ENCODE measurements at regions of chr4 and their contacts with region 1.

Region 1: GRCh38 chr4:163191999-163192398 is 25.3 kb upstream of the NAF1 start:
- DNase-seq: no peak
- H3K4me3 ChIP-seq: no peak overlapping the region
- CTCF ChIP-seq: peak; percentile 10

Region 2: GRCh38 chr4:163048447-163048846 is 143.6 kb before region 1 on chr4:
- CTCF ChIA-PET with region 1: interaction called, 14 read pairs
- POLR2A ChIA-PET with region 1: no interaction called
- DNase-seq: no peak
- H3K4me3 ChIP-seq: no peak overlapping the region
- CTCF ChIP-seq: peak; percentile 43

Region 3: DNA sequence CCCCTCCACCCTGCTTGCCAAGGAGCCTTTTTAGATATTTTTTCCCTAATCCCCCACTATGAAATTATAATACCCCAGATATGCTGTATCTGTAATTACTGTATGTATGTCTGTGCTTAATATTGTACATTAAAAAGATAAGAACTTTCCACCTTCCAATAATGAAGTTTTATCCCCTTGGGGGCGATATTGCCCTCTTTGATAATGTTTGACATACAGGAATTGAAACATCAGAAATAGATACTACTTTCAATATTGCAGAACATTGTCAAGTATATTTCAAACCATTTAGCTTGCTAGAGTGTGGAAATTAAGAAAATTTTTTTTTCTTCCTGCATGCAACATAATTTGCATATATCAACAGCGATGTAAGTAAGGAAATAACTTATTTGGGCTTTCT is 84.2 kb before region 1 on chr4:
- CTCF ChIA-PET with region 1: interaction called, 22 read pairs
- POLR2A ChIA-PET with region 1: no interaction called
- DNase-seq: no peak
- H3K4me3 ChIP-seq: no peak overlapping the region
- CTCF ChIP-seq: no peak